Activated B cell treated with CpG ODN at 0.5 μM for 24 hours (primary cell): ENCODE measurements at regions of chr6 and their contacts with region 1.

Region 1: GRCh38 chr6:83057705-83058321 is 7.8 kb downstream of the UBE3D start:
- DNase-seq: no peak
- ATAC-seq: peak; percentile 67
- H3K4me3 Mint-ChIP-seq: no peak overlapping the region
- H3K27ac Mint-ChIP-seq: no peak overlapping the region
- H3K4me1 Mint-ChIP-seq: peaks cover 5% of the 10 kb centered on the region
- H3K27me3 Mint-ChIP-seq: no peaks in the 10 kb centered on the region
- CTCF ChIP-seq: no peak

Region 2: DNA sequence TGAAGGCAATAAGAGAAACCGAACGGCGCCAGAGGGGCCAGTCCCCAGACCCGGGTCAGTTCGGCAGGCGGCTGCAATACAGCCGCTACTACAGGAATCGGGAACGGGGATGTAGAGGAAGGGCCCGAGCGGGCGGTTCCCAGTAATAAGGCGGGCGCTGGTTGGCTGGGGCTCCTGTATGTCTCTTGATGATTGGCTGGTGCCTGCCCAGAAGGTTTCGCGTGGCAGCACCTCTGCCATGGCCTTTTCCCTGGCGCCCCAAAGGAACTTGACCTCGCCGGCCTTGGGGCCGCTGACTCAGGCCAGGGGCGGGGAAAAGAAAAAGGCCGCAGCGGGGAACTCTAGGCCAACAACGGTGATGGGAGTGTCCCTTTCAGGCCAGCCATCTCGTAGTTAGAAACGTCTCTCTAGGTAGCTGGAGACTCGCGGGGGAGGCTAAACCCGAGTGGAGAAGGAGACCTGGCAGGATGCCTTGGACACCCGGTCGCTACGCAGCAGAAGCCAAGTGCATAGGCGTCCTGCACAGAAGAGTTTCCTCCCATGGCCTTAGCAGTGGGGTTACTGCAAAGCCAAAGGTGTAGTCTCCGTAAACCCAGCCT is 810.1 kb before region 1 on chr6 and contains the start of gene IBTK:
- CTCF ChIA-PET with region 1: no interaction called
- POLR2A ChIA-PET with region 1: interaction called, 3 read pairs
- intact Hi-C with region 1: loop called (anchors 1 kb)
- DNase-seq: peak; percentile 89
- ATAC-seq: peak; percentile 90
- H3K4me3 Mint-ChIP-seq: peak within 1 kb of the TSS; percentile 97
- H3K27ac Mint-ChIP-seq: peak within 1 kb of the TSS; percentile 93
- H3K4me1 Mint-ChIP-seq: peaks cover 33% of the 10 kb centered on the region
- H3K27me3 Mint-ChIP-seq: no peaks in the 10 kb centered on the region
- CTCF ChIP-seq: no peak
- total RNA-seq, gene IBTK: 25.6 and 30.1 TPM in 2 replicates

Region 3: DNA sequence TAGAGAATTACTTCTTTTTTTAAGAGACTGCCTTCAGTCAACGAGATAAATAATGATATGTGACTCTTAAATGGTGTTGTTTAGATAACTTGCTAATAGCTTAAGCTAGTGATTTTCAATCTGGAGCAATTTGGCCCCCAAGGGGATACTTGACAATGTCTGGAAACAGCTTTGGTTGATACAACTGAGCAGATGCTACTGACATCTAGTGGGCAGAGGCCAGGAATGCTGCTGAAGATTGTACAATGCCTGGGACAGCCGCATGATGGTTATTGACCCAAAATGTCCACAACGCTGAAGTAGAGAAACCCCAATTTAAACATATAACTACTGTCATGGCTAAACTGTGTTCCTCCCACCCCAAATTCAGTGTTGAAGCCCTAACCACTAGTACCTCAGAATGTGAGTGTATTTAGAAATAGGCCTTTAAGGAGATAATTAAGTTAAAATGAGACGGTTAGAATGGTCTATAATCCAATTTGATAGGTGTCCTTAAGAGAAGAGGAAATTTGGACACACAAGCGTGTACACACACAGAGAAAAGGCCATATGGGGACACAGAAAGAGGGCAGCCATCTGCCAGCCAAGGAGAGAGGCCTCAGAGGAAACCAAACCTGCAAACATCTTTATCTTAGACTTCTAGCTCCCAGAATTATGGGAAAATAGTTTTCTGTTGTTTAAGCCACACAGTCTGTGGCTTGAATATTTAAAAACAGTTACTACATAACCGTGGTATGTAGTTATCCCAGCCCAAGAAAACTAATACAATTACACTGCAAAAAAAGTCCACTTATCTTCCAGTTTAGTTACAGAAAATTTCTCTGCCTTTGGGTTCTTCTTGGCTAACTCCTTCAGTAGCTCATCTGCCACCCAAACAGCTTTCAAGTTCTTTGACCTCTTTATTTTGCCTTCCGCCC is 157.6 kb after region 1 on chr6:
- CTCF ChIA-PET with region 1: no interaction called
- POLR2A ChIA-PET with region 1: no interaction called
- intact Hi-C with region 1: loop called (anchors 1 kb)
- DNase-seq: no peak
- ATAC-seq: peak; percentile 98
- H3K4me3 Mint-ChIP-seq: no peak overlapping the region
- H3K27ac Mint-ChIP-seq: no peak overlapping the region
- H3K4me1 Mint-ChIP-seq: no peaks in the 10 kb centered on the region
- H3K27me3 Mint-ChIP-seq: peaks cover 14% of the 10 kb centered on the region
- CTCF ChIP-seq: peak; percentile 64

Region 4: DNA sequence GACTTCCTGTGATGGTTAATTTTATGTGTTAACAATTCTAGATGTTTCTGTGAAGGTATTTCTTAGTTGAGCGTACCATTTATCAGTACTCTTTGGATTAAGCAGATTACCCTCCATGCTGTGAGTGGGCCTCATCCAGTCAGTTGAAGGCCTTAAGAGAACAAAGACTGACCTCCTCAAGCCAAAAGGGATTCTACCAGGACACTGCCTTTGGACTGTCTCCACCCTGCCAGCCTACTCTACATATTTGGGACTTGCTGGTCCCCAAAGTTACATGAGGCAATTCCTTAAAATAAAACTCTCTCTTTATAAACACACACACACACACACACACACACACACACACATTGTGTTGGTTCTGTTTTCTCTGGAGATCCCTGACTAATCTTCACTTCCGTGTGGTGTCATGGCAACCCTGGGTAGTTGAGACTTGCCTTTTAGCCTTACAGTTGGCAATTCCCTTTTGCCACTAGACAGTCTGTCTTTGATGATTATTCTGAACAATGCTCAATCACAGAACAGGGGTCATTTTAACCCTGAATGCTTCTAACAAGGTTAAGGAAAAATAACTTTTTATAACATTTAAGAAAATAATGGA is 1008.0 kb after region 1 on chr6:
- CTCF ChIA-PET with region 1: no interaction called
- POLR2A ChIA-PET with region 1: no interaction called
- intact Hi-C with region 1: no loop called
- DNase-seq: no peak
- ATAC-seq: no peak
- H3K4me3 Mint-ChIP-seq: no peak overlapping the region
- H3K27ac Mint-ChIP-seq: no peak overlapping the region
- H3K4me1 Mint-ChIP-seq: no peaks in the 10 kb centered on the region
- H3K27me3 Mint-ChIP-seq: peaks cover 3% of the 10 kb centered on the region
- CTCF ChIP-seq: no peak